ENCODE measurements at regions of chr3 and their contacts with region 1.

Region 1: DNA sequence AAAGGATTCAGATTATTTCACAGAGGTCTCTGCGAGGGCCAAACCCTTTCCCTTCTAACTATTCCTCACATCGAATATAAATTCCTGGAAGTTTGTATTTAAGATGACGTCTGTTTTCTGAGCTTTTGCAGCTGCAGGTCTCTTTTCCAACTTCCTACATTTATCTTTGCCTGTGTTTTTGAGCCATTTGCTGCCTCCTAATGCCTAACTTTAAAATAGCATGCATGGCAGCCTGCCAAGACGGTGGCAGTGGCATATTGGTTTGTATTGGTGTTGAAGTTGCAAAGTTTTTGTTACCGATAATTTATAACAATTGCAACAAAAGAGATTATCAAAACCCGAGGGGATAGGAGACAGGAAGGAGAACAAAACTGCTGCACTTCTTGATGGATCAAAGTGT is 187.1 kb upstream of the DNAJC19 start:
- DNase-seq: peak; percentile 77
- H3K4me3 ChIP-seq: no peak overlapping the region
- H3K27ac ChIP-seq: no peak overlapping the region
- H3K4me1 ChIP-seq: no peaks in the 10 kb centered on the region
- H3K27me3 ChIP-seq: no peaks in the 10 kb centered on the region
- CTCF ChIP-seq: peak; percentile 49 to 64 (median 52)
- POLR2A ChIP-seq: no peak

Region 2: DNA sequence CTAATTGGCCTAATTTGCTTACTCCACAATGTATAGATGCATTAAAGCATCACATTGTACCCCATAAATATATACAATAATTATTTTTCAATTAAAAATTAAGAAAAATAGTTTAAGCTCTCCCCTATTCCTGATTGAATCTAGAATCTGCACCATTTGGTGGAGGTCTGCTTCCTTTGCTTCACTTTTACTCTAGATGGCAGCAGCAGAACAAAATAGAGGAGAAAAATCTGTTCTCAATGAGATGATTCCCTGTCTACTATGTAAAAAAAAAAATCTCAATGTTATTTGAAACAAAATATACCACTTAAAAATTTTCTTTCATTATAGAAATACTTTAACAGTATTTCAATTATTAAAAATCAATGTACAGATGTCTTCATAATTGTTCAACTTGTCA is 373.8 kb before region 1 on chr3:
- intact Hi-C with region 1: loop called (anchors 10 kb)
- DNase-seq: no peak
- H3K4me3 ChIP-seq: no peak overlapping the region
- H3K27ac ChIP-seq: no peak overlapping the region
- H3K4me1 ChIP-seq: no peaks in the 10 kb centered on the region
- H3K27me3 ChIP-seq: no peaks in the 10 kb centered on the region
- CTCF ChIP-seq: peak in 2 of 3 experiments; percentile 6 to 37
- POLR2A ChIP-seq: no peak

Measured in testis (tissue), 5 donors.